GM10248 (cell line): ENCODE measurements at regions of chr2 and their contacts with region 1.

Region 1: DNA sequence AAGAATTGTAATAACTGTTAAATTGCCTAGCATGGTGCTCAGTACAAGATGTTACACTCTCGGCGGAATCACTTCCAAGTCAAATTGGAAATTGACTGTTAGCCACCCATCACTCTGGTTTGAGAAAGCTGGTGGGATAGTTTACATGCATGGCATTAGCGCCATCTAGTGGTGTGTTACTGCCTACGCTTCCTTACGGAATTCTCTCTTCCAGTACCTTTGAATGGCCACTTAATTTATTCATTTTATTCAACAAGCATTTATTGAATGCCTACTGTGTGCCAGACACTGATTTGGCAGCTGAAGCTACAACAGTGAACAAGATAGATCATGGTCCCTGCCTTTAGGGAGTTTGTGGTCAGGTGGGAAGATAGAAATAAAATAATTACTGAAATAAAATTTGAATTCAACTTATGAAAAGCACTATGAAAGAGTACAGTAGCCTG is 171.2 kb downstream of the TMEM247 start:
- DNase-seq: peak; percentile 61
- CTCF ChIP-seq: peak; percentile 80

Region 2: GRCh38 chr2:45993476-45993991 is 657.0 kb before region 1 on chr2:
- CTCF ChIA-PET with region 1: interaction called, 10 read pairs
- POLR2A ChIA-PET with region 1: no interaction called
- DNase-seq: peak; percentile 69
- CTCF ChIP-seq: peak; percentile 71

Region 3: DNA sequence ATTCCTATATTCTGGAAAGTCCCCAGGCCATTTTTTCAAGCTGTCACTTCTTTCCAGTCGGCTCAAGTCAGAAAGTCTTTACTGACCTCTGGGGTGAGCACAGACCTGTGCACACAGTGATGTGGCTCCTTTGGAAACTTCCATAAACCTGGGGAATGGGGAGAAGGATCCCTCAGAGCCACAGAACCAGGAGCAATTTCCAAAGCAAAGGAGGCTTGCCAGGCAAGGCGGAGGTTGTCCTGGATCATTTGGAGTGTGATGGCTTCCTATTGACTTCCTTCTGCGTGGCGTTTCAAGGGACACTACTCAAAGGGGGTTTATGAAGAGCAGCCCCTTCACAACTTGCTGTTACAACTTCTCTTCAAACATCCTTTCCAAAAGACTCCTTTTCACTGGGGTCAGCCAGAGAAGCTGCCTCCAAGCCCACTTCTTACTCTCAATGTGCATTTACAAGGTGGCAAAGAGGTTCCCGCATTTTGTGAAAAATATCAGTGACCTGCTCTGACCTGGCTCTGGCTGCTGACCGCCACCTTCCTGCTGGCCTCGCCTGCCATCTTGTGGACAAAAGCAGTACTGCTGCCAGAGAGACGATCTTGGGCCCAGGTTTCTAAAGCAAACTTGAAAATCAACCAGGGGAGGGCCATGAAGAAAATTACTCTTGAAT is 189.4 kb before region 1 on chr2:
- CTCF ChIA-PET with region 1: interaction called, 29 read pairs
- POLR2A ChIA-PET with region 1: no interaction called
- DNase-seq: peak; percentile 71
- CTCF ChIP-seq: peak; percentile 97

Region 4: DNA sequence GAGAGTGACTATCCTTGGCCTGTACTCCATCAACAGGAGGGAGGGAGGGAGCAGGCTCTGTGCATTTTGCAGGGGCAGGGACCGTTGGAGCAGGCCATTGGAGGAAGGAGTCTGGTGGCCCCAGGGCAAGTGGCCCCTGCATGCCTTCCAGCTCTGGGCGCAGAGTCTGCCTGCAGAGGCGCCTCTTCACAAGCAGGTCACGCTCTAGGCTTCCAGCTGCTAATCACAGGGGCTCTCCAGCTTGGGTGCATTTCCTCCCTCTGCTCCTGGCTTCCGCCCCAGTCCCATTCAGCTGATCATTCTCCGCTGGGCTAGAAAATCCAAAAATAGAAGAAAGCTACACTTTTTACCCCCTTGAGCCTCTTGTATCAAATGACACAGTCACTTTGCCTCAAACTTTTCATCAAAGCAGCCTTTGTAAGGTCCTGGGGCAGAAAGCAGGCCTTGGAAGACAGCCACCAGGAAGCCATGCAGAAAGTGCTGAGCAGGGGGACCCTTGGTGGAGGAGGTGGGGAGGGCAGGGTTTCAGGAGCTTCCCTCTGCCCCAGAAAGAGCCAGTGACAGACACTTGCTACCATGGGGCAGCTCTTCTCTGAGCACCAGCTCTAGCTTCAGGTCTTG is 159.9 kb before region 1 on chr2:
- CTCF ChIA-PET with region 1: interaction called, 13 read pairs
- POLR2A ChIA-PET with region 1: no interaction called
- DNase-seq: peak; percentile 75
- CTCF ChIP-seq: peak; percentile 53

Region 5: DNA sequence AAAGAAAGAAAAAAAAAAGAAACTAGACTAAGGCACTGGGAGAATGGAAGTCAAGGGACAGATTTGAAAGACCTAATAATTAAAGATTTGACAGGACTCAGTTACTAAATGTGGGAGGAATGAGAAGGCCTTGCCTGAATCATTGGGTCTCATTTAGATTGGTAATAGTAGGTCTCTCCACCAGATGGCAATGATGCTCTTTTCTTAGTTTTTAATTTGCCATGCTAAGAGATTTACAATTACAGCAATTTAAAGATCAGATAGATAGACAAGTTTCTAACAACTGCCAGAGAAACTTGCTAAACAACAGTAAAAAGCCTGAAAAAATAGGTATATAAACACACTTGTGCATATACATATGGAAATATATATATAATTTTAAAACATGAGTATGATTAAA is 18.2 kb before region 1 on chr2:
- CTCF ChIA-PET with region 1: interaction called, 13 read pairs
- POLR2A ChIA-PET with region 1: no interaction called
- DNase-seq: no peak
- CTCF ChIP-seq: peak; percentile 34

Region 6: GRCh38 chr2:46663614-46664013 is 13.0 kb after region 1 on chr2:
- CTCF ChIA-PET with region 1: interaction called, 11 read pairs
- POLR2A ChIA-PET with region 1: no interaction called
- DNase-seq: no peak
- CTCF ChIP-seq: no peak

Region 7: DNA sequence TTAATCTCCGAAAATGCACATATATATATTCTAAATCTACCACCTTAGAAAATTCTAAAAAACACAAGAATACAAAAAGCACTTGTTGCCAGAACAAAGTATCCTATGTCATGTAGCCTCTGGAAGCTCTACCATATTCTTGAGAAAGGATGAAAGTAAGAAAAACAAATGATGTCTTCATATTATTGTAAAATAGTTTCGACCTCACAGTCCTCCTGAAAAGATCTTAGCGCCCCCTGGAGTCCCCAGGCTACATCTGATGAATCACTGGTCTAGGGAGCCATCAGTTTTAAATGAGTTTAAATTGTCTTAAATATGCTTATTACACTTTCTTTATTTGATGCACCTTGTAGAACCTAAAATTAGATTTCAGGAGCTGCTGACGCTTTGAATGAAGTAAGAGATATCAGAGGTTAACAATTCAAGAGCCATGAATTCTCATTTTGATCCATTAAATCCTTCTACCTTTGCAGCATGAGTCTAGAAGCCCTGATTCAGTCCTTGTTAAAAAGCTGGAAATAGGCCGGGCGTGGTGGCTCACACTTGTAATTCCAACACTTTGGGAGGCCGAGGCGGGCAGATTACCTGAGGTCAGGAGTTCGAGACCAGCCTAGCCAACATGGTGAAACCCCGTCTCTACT is 126.2 kb after region 1 on chr2:
- CTCF ChIA-PET with region 1: interaction called, 19 read pairs
- POLR2A ChIA-PET with region 1: no interaction called
- DNase-seq: peak; percentile 68
- CTCF ChIP-seq: peak; percentile 77